CD4-positive, alpha-beta memory T cell (primary cell): ENCODE measurements at regions of chr10 and their contacts with region 1.

Region 1: DNA sequence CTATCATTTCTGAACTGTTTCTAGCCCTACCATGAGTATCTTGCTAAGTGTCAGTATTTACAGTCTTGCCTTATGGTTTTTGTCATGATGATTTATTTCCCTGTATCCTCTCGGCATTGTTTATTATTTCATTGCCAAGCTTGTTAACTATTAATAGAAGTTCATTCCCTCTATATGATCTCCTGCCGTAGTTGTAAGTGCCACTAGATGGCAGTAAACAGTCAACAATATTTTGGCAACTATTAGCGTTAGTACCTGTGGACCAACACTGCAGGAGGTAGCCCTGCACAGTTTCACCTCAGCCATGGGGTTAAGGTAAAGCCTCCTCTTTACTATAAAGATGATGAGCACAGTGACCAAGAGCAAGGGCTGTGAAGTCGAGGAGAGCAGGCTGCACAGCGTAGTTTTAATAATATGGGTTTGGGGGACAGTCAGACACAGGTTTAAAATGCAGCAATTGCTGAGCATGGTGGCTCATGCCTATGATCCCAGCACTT is 26.1 kb upstream of the CCNJ start:
- DNase-seq: peak; percentile 41 to 53 (median 46)
- H3K4me3 ChIP-seq: no peak overlapping the region
- H3K4me3 Mint-ChIP-seq: no peak overlapping the region
- H3K27ac ChIP-seq: no peak overlapping the region
- H3K27ac Mint-ChIP-seq: no peak overlapping the region
- H3K4me1 ChIP-seq: no peaks in the 10 kb centered on the region
- H3K4me1 Mint-ChIP-seq: peaks cover 0 to 4% (median 3%) of the 10 kb centered on the region in 4 donors
- H3K27me3 ChIP-seq: no peaks in the 10 kb centered on the region
- H3K27me3 Mint-ChIP-seq: peaks cover 4 to 5% of the 10 kb centered on the region in 2 donors

Region 2: DNA sequence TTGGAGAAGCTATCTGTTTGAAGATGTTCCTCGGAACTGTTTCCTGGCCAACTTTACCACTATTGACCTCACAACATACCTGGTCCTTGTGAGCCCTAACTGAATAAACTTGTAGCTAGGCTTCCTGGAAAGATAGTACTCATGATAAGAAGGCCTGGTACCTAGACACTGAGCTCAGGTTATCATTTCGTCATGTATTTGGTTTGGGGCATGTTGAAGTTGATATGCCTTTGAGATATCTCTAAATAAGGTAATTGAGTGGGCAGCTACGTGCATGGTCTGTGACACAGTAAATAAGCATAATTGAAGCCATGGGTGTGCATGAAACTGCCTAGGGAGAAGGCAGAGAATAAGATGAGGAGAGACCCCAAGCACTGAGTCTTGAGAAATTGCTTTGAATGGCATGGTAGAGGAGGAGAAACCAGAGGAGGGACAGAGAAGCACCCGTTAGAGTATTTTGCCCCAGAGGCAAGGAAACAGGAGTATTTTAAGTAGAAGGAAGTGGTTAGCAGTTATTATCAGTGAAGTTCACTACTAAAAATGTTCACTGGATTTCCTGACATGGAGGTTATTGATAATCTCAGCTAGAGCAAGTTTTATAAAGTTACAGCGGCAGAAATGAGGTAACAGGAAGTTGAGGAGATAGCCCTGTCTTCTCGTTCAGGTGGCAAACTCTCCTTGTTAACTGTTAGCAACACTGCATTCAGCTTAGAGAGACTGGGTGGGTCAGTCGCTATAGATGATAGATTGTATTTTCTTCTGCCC is 53.8 kb before region 1 on chr10:
- CTCF ChIA-PET with region 1: no interaction called
- POLR2A ChIA-PET with region 1: no interaction called
- intact Hi-C with region 1: no loop called
- DNase-seq: peak in 4 of 5 donors; percentile 7 to 19 (median 12)
- H3K4me3 ChIP-seq: peak overlapping the region in 1 of 2 donors; percentile 20
- H3K4me3 Mint-ChIP-seq: peak overlapping the region in 7 of 8 donors; percentile 36 to 69 (median 59)
- H3K27ac ChIP-seq: no peak overlapping the region
- H3K27ac Mint-ChIP-seq: peak overlapping the region; percentile 38 to 78 (median 70)
- H3K4me1 ChIP-seq: peaks cover 22% of the 10 kb centered on the region
- H3K4me1 Mint-ChIP-seq: peaks cover 11 to 18% (median 16%) of the 10 kb centered on the region in 4 donors
- H3K27me3 ChIP-seq: no peaks in the 10 kb centered on the region
- H3K27me3 Mint-ChIP-seq: peaks cover 0 to 3% of the 10 kb centered on the region in 2 donors

Region 3: DNA sequence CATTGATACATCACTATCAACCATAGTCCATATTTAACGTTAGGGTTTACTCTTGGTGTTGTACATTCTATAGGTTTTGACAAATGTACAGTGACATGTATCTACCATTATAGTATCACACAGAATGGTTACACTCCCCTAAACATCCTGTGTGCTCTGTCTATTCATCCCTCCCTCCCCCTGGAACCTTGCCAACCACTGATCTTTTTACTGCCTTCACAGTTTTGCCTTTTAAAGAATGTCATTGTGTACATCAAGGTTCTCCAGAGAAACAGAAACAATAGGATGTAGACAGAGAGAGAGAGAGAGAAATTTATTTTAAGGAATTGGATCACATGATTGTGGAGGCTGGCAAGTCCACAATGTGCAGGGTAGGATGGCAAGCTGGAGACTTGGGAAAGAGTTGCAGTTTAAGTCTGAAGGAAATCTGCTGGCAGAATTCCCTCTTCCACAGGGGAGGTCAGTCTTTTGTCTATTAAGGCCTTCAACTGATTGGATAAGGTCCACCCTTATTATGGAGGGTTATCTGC is 18.9 kb before region 1 on chr10:
- CTCF ChIA-PET with region 1: interaction called, 33 read pairs
- POLR2A ChIA-PET with region 1: no interaction called
- intact Hi-C with region 1: no loop called
- DNase-seq: no peak
- H3K4me3 ChIP-seq: no peak overlapping the region
- H3K4me3 Mint-ChIP-seq: no peak overlapping the region
- H3K27ac ChIP-seq: no peak overlapping the region
- H3K27ac Mint-ChIP-seq: no peak overlapping the region
- H3K4me1 ChIP-seq: no peaks in the 10 kb centered on the region
- H3K4me1 Mint-ChIP-seq: no peaks in the 10 kb centered on the region
- H3K27me3 ChIP-seq: no peaks in the 10 kb centered on the region
- H3K27me3 Mint-ChIP-seq: no peaks in the 10 kb centered on the region

Region 4: DNA sequence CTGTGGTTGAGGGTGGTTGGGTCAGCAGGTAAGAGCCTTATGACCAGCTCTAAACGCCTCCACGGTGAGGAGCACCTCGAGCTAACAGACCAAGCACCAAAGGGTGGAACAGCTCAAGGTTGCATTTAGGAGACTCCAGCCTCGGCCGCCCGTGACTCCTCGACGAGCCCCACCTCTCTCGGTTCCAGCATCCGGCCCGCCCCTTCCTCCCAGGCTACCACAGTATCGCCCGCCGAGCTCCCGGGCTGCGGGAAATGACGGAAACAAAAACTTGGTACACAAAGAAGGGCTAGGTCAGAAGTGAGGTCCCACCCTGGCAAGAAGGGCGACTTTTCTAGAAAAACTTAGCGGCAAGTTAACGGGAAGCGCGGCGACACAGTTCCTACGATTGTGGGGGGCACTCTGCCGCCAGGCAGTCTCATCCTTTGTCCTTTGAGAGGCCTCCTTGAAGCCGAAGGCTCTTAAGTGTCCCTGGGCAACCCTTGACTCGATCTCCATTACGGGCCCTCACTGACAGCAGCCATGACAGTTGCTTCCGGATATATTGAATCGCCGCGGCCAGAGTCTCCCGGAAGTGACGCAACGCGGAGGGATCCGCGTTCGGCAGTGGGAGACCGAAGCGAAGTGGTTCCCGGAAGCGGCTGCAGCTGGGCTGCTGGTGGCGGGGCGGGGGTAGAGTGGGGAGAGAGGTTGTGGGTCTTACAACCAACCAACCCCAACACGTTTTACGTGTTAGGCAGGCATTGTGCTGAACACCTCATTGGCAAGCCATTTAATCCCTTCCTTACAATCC is 72.6 kb after region 1 on chr10:
- CTCF ChIA-PET with region 1: interaction called, 15 read pairs
- POLR2A ChIA-PET with region 1: interaction called, 3 read pairs
- intact Hi-C with region 1: no loop called
- DNase-seq: peak; percentile 89 to 94 (median 91)
- H3K4me3 ChIP-seq: peak overlapping the region; percentile 71 to 88
- H3K4me3 Mint-ChIP-seq: peak overlapping the region; percentile 91 to 97 (median 96)
- H3K27ac ChIP-seq: peak overlapping the region; percentile 91
- H3K27ac Mint-ChIP-seq: peak overlapping the region; percentile 98 to 100 (median 99)
- H3K4me1 ChIP-seq: peaks cover 12% of the 10 kb centered on the region
- H3K4me1 Mint-ChIP-seq: peaks cover 5 to 11% (median 7%) of the 10 kb centered on the region in 4 donors
- H3K27me3 ChIP-seq: peaks cover 9% of the 10 kb centered on the region
- H3K27me3 Mint-ChIP-seq: peaks cover 23 to 26% of the 10 kb centered on the region in 2 donors

Region 5: DNA sequence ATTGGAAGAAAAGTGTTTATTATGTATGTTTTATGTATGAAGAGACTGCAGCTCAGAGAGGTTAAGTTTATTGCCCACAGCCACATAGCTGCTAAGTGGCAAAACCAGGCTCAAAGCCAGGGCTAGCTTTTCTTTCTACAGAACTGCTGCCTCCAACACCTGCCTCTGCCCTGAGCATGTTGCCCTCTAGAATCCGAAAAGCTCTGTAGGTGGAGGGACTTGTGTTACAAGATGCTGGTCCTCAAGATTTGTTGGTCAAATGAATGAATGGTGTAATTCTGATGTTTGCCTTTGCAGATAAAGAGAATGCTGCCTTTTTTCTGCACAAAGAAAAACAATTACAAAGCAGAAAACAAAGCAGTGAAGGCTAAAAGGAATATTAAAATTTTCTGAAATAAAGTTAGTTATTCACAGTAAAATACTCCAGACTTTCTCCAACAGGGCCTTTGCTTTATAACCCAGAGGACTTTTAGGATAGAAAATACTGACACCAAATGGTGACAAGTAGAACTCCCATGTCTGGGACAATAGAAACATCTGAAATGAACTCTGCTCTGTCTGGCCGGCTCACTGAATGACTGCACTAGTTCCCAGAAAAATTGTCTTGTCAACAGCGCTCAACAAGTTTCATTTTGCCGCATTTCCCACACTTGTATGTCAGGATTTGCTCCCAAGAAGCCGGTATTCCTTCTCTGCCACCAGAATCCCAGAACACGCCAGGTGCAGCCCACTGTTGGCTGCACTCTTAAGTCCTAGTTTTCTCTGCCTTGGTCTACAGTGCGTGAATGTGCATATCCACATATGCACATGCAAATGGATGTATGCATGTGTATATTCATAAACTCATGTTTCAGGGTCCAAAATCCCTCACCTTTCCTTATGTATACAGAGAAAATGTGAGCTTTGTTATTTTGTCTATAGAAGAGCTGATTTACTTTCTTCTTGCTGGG is 276.0 kb after region 1 on chr10:
- CTCF ChIA-PET with region 1: interaction called, 51 read pairs
- POLR2A ChIA-PET with region 1: no interaction called
- intact Hi-C with region 1: loop called (anchors 1 kb)
- DNase-seq: peak in 2 of 5 donors; percentile 3
- H3K4me3 ChIP-seq: no peak overlapping the region
- H3K4me3 Mint-ChIP-seq: no peak overlapping the region
- H3K27ac ChIP-seq: no peak overlapping the region
- H3K27ac Mint-ChIP-seq: no peak overlapping the region
- H3K4me1 ChIP-seq: no peaks in the 10 kb centered on the region
- H3K4me1 Mint-ChIP-seq: peaks cover 0 to 11% (median 3%) of the 10 kb centered on the region in 4 donors
- H3K27me3 ChIP-seq: no peaks in the 10 kb centered on the region
- H3K27me3 Mint-ChIP-seq: peaks cover 9 to 33% of the 10 kb centered on the region in 2 donors

Region 6: DNA sequence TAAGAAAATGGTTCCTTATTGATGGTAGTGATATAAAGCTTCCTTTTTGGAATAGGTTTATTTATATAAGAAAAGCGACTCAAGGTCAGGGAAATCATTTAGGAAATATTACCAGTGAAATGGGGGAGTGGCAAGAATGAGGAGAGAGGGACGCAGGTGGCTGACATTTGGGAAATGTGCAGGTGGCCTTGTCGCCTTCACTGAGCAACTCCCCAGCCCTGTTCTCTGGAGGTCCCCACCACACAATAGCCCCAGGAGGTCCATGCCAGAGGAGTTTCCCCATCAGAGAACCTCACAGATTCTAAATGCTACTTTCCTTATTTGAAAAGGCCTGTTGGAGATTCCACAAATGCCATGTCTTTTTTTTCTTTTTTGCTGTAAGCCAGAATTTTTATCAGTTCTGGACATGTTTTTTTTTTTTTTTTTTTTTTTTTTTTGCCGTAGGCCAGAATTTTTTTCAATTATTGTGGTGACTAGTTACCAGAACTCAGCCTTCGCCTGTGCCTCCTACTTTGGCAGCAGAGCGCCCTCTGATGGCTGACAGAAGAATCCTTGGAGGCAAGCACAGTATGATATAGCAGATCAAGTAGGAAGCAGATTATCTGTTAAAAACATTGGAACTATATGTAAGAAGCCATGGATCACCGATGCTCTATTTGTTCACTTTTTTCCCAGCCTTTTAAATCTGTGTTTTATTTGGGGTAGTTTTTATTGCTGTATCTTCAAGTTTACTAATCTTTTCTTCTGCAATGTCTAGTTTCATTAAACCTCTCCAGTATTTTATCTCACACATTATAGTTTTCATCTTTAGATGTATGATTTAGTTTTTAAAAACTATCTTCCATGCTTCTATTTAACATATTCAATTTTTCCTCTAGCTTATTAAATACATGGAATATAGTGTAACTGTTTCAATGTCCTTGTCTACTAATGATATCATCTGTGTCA is 323.0 kb after region 1 on chr10:
- CTCF ChIA-PET with region 1: interaction called, 67 read pairs
- POLR2A ChIA-PET with region 1: no interaction called
- intact Hi-C with region 1: no loop called
- DNase-seq: peak in 4 of 5 donors; percentile 30 to 51 (median 45)
- H3K4me3 ChIP-seq: no peak overlapping the region
- H3K4me3 Mint-ChIP-seq: no peak overlapping the region
- H3K27ac ChIP-seq: no peak overlapping the region
- H3K27ac Mint-ChIP-seq: no peak overlapping the region
- H3K4me1 ChIP-seq: no peaks in the 10 kb centered on the region
- H3K4me1 Mint-ChIP-seq: no peaks in the 10 kb centered on the region
- H3K27me3 ChIP-seq: peaks cover 2% of the 10 kb centered on the region
- H3K27me3 Mint-ChIP-seq: peaks cover 2 to 23% of the 10 kb centered on the region in 2 donors